ENCODE measurements at regions of chr16 and their contacts with region 1.

Region 1: DNA sequence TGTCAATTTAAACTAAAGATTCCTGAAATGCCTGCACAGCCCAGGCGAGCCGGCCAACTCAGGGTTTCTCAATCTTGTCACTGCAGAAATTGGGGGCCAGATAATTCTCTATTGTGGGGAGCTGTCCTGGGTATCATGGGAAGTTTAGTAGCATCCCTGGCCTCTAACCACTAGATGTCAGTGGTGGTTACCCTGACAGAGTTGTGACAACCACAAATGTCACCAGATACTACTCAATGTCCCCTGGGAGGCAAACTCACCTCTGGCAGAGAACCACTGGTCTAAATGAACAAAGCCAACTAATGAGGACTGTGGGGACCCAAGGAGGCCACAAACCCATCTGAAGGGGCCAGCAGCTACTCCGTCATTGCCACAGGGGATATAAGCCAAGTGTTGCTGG is 90.9 kb downstream of the MYH11 start:
- DNase-seq: peak; percentile 80
- CTCF ChIP-seq: peak; percentile 80

Region 2: DNA sequence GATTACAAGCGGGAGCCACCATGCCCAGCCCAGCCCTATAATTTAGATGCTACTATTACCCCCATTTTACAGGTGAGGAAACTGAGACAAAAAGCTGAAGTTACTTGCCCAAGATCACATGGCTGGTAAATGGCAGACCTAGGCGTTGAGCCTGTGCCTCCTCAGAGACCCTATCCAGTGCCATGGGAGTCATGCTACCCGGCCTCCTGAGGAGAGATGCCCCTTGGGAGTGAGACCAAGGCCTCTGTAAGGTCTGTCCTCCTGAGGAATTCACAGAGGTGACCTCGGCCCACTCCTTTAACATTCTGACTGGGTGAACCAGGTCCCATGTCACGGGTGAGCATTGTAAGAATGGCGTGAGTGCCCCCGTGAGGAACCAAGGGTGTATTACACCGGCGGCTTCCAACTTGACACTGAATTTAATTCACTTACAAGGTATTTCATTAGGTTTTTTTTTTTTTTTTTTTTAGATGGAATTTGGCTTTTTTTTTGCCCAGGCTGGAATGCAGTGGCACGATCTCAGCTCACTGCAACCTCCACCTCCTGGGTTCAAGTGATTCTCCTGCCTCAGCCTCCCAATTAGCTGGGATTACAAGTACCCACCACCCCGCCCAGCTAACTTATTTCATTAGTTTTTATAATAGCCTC is 361.7 kb after region 1 on chr16:
- in situ Hi-C with region 1: loop called (anchors 10 kb)
- DNase-seq: peak; percentile 80
- CTCF ChIP-seq: peak; percentile 81

Measured in GM13977 (cell line).